ENCODE measurements at regions of chr19 and their contacts with region 1.

Region 1: GRCh38 chr19:40305403-40305802 is 20.3 kb upstream of the AKT2 start:
- DNase-seq: peak; percentile 96 to 99
- ATAC-seq: peak; percentile 94 to 96
- H3K4me3 ChIP-seq: no peak overlapping the region
- H3K27ac ChIP-seq: no peak overlapping the region
- H3K4me1 ChIP-seq: no peaks in the 10 kb centered on the region
- CTCF ChIP-seq: peak; percentile 100
- EP300 ChIP-seq: no peak
- POLR2A ChIP-seq: no peak
- RAD21 ChIP-seq: peak; percentile 95 to 98

Region 2: GRCh38 chr19:40139533-40140287 is 165.7 kb before region 1 on chr19:
- CTCF ChIA-PET with region 1: interaction called, 27 read pairs
- POLR2A ChIA-PET with region 1: no interaction called
- DNase-seq: peak; percentile 77 to 79
- ATAC-seq: peak; percentile 59 to 71
- H3K4me3 ChIP-seq: no peak overlapping the region
- H3K27ac ChIP-seq: no peak overlapping the region
- H3K4me1 ChIP-seq: no peaks in the 10 kb centered on the region
- CTCF ChIP-seq: peak; percentile 99
- EP300 ChIP-seq: no peak
- POLR2A ChIP-seq: no peak
- RAD21 ChIP-seq: peak; percentile 100

Region 3: DNA sequence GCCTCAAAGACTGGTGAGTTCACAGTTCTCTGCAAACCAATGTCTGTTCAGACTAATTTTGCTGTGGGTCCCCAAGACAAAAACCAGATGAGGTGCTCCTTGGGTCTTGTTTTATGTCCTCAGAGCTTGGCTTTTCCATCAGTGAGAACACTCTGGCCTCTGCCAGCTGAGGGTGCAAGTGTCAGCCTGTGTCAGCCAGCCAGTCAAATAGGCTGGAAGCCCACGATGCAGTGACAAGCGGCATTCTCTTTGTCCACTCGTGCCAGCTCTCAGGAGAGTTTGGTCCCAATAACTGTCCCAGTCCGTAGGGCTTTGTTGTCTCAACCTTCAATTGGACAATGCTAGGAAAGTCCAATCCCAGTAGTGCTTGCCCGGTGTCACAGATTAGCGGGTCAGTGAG is 10.8 kb before region 1 on chr19:
- CTCF ChIA-PET with region 1: interaction called, 86 read pairs
- POLR2A ChIA-PET with region 1: no interaction called
- DNase-seq: no peak
- ATAC-seq: peak in 1 of 2 experiments; percentile 13; a peak in 1 of 6 replicates
- H3K4me3 ChIP-seq: no peak overlapping the region
- H3K27ac ChIP-seq: no peak overlapping the region
- H3K4me1 ChIP-seq: no peaks in the 10 kb centered on the region
- CTCF ChIP-seq: no peak
- EP300 ChIP-seq: no peak
- POLR2A ChIP-seq: no peak
- RAD21 ChIP-seq: no peak

Region 4: GRCh38 chr19:40341601-40342482 is 36.4 kb after region 1 on chr19:
- CTCF ChIA-PET with region 1: interaction called, 45 read pairs
- POLR2A ChIA-PET with region 1: no interaction called
- DNase-seq: no peak
- ATAC-seq: peak; percentile 21 to 31; a peak in 2 of 6 replicates
- H3K4me3 ChIP-seq: no peak overlapping the region
- H3K27ac ChIP-seq: no peak overlapping the region
- H3K4me1 ChIP-seq: no peaks in the 10 kb centered on the region; the same call in 2 of the 3 replicates
- CTCF ChIP-seq: no peak
- EP300 ChIP-seq: no peak
- POLR2A ChIP-seq: no peak
- RAD21 ChIP-seq: no peak

Region 5: GRCh38 chr19:40370997-40371801 is 65.8 kb after region 1 on chr19:
- CTCF ChIA-PET with region 1: interaction called, 36 read pairs
- POLR2A ChIA-PET with region 1: interaction called, 8 read pairs
- DNase-seq: no peak
- ATAC-seq: peak in 1 of 2 experiments; percentile 12; a peak in 2 of 6 replicates
- H3K4me3 ChIP-seq: no peak overlapping the region
- H3K27ac ChIP-seq: no peak overlapping the region
- H3K4me1 ChIP-seq: peaks cover 8% of the 10 kb centered on the region
- CTCF ChIP-seq: no peak
- EP300 ChIP-seq: no peak
- POLR2A ChIP-seq: no peak
- RAD21 ChIP-seq: no peak

Region 6: GRCh38 chr19:40416918-40417642 is 111.7 kb after region 1 on chr19:
- CTCF ChIA-PET with region 1: interaction called, 32 read pairs
- POLR2A ChIA-PET with region 1: interaction called, 5 read pairs
- DNase-seq: peak in 1 of 2 experiments; percentile 71
- ATAC-seq: peak in 1 of 2 experiments; percentile 0; a peak in 1 of 6 replicates
- H3K4me3 ChIP-seq: no peak overlapping the region
- H3K27ac ChIP-seq: peak overlapping the region; percentile 37 to 75
- H3K4me1 ChIP-seq: peaks cover 17% of the 10 kb centered on the region
- CTCF ChIP-seq: no peak
- EP300 ChIP-seq: no peak
- POLR2A ChIP-seq: no peak
- RAD21 ChIP-seq: no peak

Region 7: DNA sequence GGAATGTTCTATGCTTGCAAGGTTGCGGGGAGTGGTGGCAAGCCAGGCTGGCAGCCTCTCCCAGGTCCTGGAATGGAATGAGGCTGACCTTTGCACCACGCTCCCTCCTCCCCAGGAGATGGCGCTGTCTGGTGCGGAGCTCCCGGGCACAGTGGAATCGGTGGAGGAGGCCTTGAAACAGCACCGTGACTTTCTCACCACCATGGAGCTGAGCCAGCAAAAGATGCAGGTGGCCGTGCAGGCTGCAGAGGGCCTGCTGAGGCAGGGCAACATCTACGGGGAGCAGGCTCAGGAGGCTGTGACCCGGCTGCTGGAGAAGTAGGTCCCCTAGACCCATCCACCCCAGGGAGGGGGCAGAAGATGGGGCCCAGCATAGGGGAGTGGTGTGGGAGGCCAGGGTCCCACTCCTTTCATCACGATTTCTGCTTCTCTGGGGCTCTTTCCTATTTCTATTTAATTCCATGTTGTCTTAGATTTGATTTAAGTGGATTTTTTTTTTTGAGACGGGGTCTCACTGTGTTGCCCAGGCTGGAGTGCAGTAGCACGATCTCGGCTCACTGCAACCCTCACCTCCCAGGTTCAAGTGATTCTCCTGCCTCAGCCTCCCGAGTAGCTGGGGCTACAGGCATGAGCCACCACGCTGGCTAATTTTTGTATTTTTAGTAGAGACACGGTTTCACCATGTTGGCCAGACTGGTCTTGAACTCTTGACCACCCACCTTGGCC is 218.1 kb after region 1 on chr19:
- CTCF ChIA-PET with region 1: interaction called, 10 read pairs
- POLR2A ChIA-PET with region 1: no interaction called
- DNase-seq: peak; percentile 93 to 96
- ATAC-seq: peak; percentile 80 to 90
- H3K4me3 ChIP-seq: peak overlapping the region; percentile 9; the same call in 2 of the 3 replicates
- H3K27ac ChIP-seq: peak overlapping the region; percentile 57 to 73
- H3K4me1 ChIP-seq: peaks cover 21% of the 10 kb centered on the region
- CTCF ChIP-seq: peak; percentile 92
- EP300 ChIP-seq: no peak
- POLR2A ChIP-seq: no peak
- RAD21 ChIP-seq: peak; percentile 62 to 73

Region 8: GRCh38 chr19:41226053-41226873 is 920.9 kb after region 1 on chr19:
- CTCF ChIA-PET with region 1: no interaction called
- POLR2A ChIA-PET with region 1: no interaction called
- DNase-seq: peak; percentile 95 to 97
- ATAC-seq: peak; percentile 73 to 77
- H3K4me3 ChIP-seq: peak overlapping the region; percentile 41
- H3K27ac ChIP-seq: peak overlapping the region; percentile 91 to 95
- H3K4me1 ChIP-seq: peaks cover 64% of the 10 kb centered on the region
- CTCF ChIP-seq: no peak
- EP300 ChIP-seq: peak; percentile 72 to 93; a peak in 3 of 5 replicates
- POLR2A ChIP-seq: no peak; the same call in 1 of the 2 replicates
- RAD21 ChIP-seq: peak in 1 of 2 experiments; percentile 36; a peak in 3 of 5 replicates